ENCODE measurements at regions of chr15 and their contacts with region 1.

Region 1: GRCh38 chr15:83436458-83437158 is 10.5 kb upstream of the SH3GL3 start:
- DNase-seq: peak; percentile 79

Region 2: DNA sequence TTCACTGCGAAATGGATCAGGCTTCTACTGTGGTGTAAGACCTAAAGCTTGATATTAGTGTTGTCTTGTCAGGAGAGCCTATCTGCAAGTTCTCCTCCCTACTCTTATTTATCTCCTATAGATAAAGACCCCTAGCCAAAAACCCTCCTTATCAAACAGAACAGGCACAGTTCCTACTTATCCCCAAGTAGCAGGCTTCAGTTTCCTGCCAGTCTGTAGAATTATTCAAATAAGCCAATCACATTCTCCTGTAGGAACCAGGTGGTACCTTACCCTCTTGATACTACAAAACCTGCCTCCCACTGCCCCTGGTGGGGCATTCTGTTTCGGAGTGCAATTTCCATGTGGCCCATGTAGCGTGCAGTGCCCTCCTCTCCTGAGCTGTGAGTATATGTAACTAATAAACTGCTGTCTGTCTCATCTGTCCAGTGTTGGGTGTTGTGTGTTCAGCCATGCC is 257.7 kb before region 1 on chr15:
- in situ Hi-C with region 1: no loop called
- DNase-seq: peak; percentile 13

Region 3: GRCh38 chr15:83250801-83251200 is 185.8 kb before region 1 on chr15:
- in situ Hi-C with region 1: loop called (anchors 10 kb)
- DNase-seq: no peak

Region 4: DNA sequence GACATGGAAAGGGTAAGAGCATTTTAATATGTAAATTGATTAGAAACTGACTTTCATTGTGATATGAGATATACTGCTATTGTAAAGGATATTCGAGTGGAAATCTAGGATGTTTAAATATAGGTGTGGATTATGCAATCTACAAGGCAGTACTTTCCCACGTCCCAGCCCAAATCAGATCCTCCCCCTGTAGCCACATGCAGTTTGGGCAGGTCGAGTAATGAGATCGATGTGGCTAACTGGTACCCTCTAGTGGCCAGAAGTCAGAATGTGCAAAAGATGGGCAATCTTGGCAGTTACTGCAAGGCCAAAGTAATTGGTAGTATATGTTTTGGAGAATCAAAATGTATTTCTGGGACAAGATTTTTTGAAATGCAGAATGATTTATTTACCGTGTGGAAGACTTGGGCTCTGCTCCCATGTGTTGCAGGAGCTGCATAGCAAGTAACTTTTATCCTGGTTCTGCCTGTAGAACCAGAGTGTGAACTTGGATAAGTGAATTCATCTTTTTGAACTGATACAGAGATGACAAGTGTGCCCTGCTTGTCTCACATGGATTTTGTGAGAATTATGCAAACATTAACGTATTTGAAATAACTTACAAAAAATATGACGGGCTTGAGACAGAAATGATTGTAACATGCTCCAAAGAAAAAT is 122.8 kb after region 1 on chr15:
- in situ Hi-C with region 1: loop called (anchors 10 kb)
- DNase-seq: peak; percentile 85